ENCODE measurements at regions of chr6 and their contacts with region 1.

Region 1: GRCh38 chr6:16420715-16421461 is 182.5 kb downstream of the GMPR start:
- DNase-seq: peak; percentile 46
- ATAC-seq: peak; percentile 90
- H3K4me3 Mint-ChIP-seq: peak overlapping the region; percentile 60
- H3K27ac Mint-ChIP-seq: peak overlapping the region; percentile 95
- H3K4me1 Mint-ChIP-seq: peaks cover 46% of the 10 kb centered on the region
- H3K27me3 Mint-ChIP-seq: no peaks in the 10 kb centered on the region

Region 2: DNA sequence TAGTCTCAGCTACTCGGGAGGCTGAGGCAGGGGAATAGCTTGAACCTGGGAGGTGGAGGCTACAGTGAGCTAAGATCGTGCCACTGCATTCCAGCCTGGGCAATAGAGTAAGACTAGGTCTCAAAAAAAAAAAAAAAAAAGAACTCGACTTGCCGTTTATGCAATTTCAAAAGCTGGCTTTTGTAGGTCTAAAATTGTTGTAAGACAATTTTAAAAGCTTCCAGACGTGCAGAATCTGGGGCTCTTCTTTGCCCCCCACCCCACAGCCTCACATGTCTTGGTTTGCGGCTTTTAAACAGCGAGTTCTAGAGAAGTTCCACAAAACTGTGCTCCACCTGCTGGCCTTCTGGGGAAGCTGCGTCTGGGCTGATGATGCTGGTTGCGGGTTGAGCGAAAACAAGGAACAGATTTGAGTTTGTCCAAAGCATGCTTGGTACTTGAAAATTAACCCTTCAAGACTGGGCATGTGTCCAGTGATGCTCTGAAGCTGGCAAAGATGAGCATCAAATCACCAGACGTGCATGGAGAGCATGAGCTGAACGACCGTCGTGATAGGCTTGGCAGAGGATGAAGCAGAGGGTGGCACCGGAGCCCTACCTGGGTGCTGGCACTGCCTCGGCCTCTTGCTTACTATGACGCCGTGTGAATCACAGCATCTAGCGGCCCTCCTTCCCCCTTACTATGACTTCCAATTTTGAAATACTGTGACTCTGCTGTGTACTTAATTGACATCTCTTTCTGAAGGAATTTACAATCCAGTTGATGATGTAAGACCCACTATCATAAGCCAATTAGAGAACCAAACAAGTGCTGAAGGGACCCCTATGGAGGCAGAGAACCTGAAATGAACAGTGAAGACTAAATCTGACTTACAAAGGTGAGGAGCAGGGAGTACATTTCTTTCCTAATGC is 11.1 kb before region 1 on chr6:
- CTCF ChIA-PET with region 1: interaction called, 33 read pairs
- POLR2A ChIA-PET with region 1: no interaction called
- DNase-seq: peak; percentile 72
- ATAC-seq: peak; percentile 82
- H3K4me3 Mint-ChIP-seq: no peak overlapping the region
- H3K27ac Mint-ChIP-seq: no peak overlapping the region
- H3K4me1 Mint-ChIP-seq: peaks cover 38% of the 10 kb centered on the region
- H3K27me3 Mint-ChIP-seq: no peaks in the 10 kb centered on the region

Region 3: GRCh38 chr6:16437984-16438383 is 17.1 kb after region 1 on chr6:
- CTCF ChIA-PET with region 1: interaction called, 5 read pairs
- POLR2A ChIA-PET with region 1: interaction called, 13 read pairs
- DNase-seq: no peak
- ATAC-seq: peak; percentile 31
- H3K4me3 Mint-ChIP-seq: peak overlapping the region; percentile 61
- H3K27ac Mint-ChIP-seq: peak overlapping the region; percentile 48
- H3K4me1 Mint-ChIP-seq: peaks cover 57% of the 10 kb centered on the region
- H3K27me3 Mint-ChIP-seq: no peaks in the 10 kb centered on the region

Region 4: GRCh38 chr6:16471222-16471909 is 50.5 kb after region 1 on chr6:
- CTCF ChIA-PET with region 1: interaction called, 5 read pairs
- POLR2A ChIA-PET with region 1: interaction called, 10 read pairs
- DNase-seq: no peak
- ATAC-seq: peak; percentile 20
- H3K4me3 Mint-ChIP-seq: no peak overlapping the region
- H3K27ac Mint-ChIP-seq: peak overlapping the region; percentile 61
- H3K4me1 Mint-ChIP-seq: peaks cover 71% of the 10 kb centered on the region
- H3K27me3 Mint-ChIP-seq: no peaks in the 10 kb centered on the region

Region 5: GRCh38 chr6:16481697-16482399 is 61.0 kb after region 1 on chr6:
- CTCF ChIA-PET with region 1: interaction called, 6 read pairs
- POLR2A ChIA-PET with region 1: interaction called, 13 read pairs
- DNase-seq: peak; percentile 83
- ATAC-seq: peak; percentile 78
- H3K4me3 Mint-ChIP-seq: peak overlapping the region; percentile 26
- H3K27ac Mint-ChIP-seq: peak overlapping the region; percentile 93
- H3K4me1 Mint-ChIP-seq: peaks cover 80% of the 10 kb centered on the region
- H3K27me3 Mint-ChIP-seq: no peaks in the 10 kb centered on the region

Region 6: GRCh38 chr6:16836144-16836981 is 415.5 kb after region 1 on chr6:
- CTCF ChIA-PET with region 1: no interaction called
- POLR2A ChIA-PET with region 1: no interaction called
- DNase-seq: no peak
- ATAC-seq: no peak
- H3K4me3 Mint-ChIP-seq: peak overlapping the region; percentile 55
- H3K27ac Mint-ChIP-seq: peak overlapping the region; percentile 80
- H3K4me1 Mint-ChIP-seq: peaks cover 25% of the 10 kb centered on the region
- H3K27me3 Mint-ChIP-seq: peaks cover 9% of the 10 kb centered on the region